Left cardiac atrium (tissue), 4 donors: ENCODE measurements at regions of chr12 and their contacts with region 1.

Region 1: GRCh38 chr12:112992541-112993398 is 14.5 kb downstream of the OAS2 start:
- DNase-seq: peak; percentile 45
- ATAC-seq: peak in 1 of 2 donors; percentile 47

Region 2: DNA sequence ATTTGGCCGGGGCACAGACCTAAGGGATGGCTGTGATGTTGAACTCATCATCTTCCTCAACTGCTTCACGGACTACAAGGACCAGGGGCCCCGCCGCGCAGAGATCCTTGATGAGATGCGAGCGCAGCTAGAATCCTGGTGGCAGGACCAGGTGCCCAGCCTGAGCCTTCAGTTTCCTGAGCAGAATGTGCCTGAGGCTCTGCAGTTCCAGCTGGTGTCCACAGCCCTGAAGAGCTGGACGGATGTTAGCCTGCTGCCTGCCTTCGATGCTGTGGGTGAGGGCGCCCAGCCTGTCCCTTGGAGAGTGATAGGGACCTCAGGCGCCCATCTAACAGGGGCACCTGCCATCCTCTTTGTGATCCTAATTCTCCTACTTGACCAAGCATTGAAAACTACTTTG is 42.1 kb before region 1 on chr12:
- intact Hi-C with region 1: no loop called
- DNase-seq: no peak
- ATAC-seq: no peak

Region 3: GRCh38 chr12:113030875-113031525 is 38.2 kb after region 1 on chr12:
- intact Hi-C with region 1: loop called in 1 of 2 experiments (anchors 2 kb)
- DNase-seq: peak; percentile 24
- ATAC-seq: peak; percentile 65 to 72

Region 4: GRCh38 chr12:113174461-113175384 is 182.0 kb after region 1 on chr12:
- intact Hi-C with region 1: loop called in 1 of 2 experiments (anchors 5 kb)
- DNase-seq: peak; percentile 70
- ATAC-seq: peak; percentile 78 to 83